ENCODE measurements at regions of chr12 and their contacts with region 1.

Region 1: GRCh38 chr12:75390899-75391538 is at the start of gene GLIPR1L2:
- DNase-seq: peak; percentile 98
- H3K4me3 Mint-ChIP-seq: peak within 1 kb of the TSS; percentile 91
- H3K27ac Mint-ChIP-seq: peak within 1 kb of the TSS; percentile 99
- H3K4me1 Mint-ChIP-seq: peaks cover 28% of the 10 kb centered on the region
- H3K27me3 Mint-ChIP-seq: no peaks in the 10 kb centered on the region
- CTCF ChIP-seq: peak; percentile 85
- total RNA-seq, gene GLIPR1L2: 0.23 TPM in 1 of 2 replicates, not detected in the other

Region 2: GRCh38 chr12:74646831-74647230 is 744.2 kb before region 1 on chr12:
- CTCF ChIA-PET with region 1: no interaction called
- POLR2A ChIA-PET with region 1: no interaction called
- intact Hi-C with region 1: no loop called
- DNase-seq: peak; percentile 51
- H3K4me3 Mint-ChIP-seq: no peak overlapping the region
- H3K27ac Mint-ChIP-seq: no peak overlapping the region
- H3K4me1 Mint-ChIP-seq: no peaks in the 10 kb centered on the region
- H3K27me3 Mint-ChIP-seq: no peaks in the 10 kb centered on the region
- CTCF ChIP-seq: peak; percentile 29

Region 3: DNA sequence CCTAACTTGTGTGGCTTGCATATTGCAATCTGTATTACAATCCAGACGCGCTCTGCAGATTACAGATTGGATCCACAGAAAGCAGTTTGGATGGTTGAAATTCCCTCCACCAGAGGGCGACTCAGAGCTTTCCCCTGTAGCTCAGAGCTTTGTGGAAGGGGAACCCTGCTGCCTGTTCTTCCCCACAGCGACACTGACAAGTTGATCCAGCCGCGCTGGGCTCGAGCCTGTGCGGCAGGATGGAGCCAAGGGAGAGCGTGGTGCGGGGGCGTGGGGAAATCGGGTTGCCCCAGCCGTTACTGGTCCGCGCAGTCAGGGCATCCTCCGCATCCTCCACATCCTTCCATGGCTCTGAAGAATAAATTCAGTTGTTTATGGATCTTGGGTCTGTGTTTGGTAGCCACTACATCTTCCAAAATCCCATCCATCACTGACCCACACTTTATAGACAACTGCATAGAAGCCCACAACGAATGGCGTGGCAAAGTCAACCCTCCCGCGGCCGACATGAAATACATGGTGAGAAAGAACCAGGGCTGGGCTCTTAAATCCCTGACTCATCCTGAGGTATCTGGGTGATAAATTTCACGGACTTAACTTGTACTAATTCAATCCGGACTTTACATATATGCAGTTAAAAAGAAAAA is 56.5 kb before region 1 on chr12 and contains the start of gene GLIPR1L1:
- CTCF ChIA-PET with region 1: interaction called, 8 read pairs
- POLR2A ChIA-PET with region 1: interaction called, 16 read pairs
- intact Hi-C with region 1: loop called (anchors 1 kb)
- DNase-seq: peak; percentile 88
- H3K4me3 Mint-ChIP-seq: peak within 1 kb of the TSS; percentile 77
- H3K27ac Mint-ChIP-seq: peak within 1 kb of the TSS; percentile 33
- H3K4me1 Mint-ChIP-seq: peaks cover 8% of the 10 kb centered on the region
- H3K27me3 Mint-ChIP-seq: no peaks in the 10 kb centered on the region
- CTCF ChIP-seq: peak; percentile 91
- total RNA-seq, gene GLIPR1L1: not detected in 2 replicates

Region 4: GRCh38 chr12:75378354-75378753 is 12.7 kb before region 1 on chr12:
- CTCF ChIA-PET with region 1: interaction called, 5 read pairs
- POLR2A ChIA-PET with region 1: interaction called, 14 read pairs
- intact Hi-C with region 1: no loop called
- DNase-seq: peak; percentile 3
- H3K4me3 Mint-ChIP-seq: no peak overlapping the region
- H3K27ac Mint-ChIP-seq: peak overlapping the region; percentile 44
- H3K4me1 Mint-ChIP-seq: peaks cover 6% of the 10 kb centered on the region
- H3K27me3 Mint-ChIP-seq: no peaks in the 10 kb centered on the region
- CTCF ChIP-seq: no peak

Region 5: DNA sequence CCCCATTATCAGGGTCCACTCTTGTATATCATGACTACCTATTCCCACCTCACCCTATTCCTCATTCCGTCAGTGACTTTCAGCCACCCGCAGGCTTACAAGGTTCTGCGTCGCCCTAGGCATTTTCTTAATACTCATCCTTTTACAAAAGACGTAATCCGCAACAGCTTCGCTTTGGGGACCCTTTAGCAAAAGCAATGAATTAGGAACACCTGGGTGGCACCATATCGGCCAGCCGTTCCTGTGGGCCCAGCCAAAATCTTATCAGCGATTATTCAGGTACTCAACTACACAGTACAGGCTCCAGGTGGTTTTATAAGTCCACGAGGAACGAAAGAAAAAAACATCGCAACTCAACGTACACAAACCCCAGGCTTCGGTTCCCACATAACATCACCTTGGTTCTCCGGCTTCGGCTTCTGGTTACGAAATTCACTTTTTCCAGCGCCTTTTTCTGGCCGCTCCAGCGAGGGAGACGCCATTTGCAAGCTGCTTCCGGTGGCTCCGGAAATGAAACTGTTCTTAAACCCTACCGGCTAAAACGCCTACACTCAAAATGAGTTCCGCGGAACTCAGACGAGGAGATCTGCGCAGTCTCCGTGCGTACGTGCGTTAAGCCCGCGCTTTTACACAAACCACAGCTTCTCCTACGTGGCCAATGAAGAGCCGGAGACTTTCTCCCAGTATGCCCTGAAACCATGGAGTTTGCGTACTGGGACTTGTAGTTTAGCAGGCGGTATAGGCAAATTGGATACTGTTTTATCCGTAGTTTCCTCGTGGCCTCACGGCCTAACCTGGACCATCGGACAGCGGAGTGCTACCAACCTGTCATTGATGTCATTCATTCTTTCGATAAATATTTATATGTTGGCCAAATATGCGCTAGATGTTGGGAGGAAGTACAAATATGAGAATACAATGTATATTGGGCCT is 120.4 kb after region 1 on chr12 and contains the start of gene KRR1:
- CTCF ChIA-PET with region 1: interaction called, 9 read pairs
- POLR2A ChIA-PET with region 1: interaction called, 41 read pairs
- intact Hi-C with region 1: loop called (anchors 2 kb)
- DNase-seq: peak; percentile 95
- H3K4me3 Mint-ChIP-seq: peak within 1 kb of the TSS; percentile 100
- H3K27ac Mint-ChIP-seq: peak within 1 kb of the TSS; percentile 99
- H3K4me1 Mint-ChIP-seq: peaks cover 19% of the 10 kb centered on the region
- H3K27me3 Mint-ChIP-seq: no peaks in the 10 kb centered on the region
- CTCF ChIP-seq: no peak
- total RNA-seq, gene KRR1: 68.0 and 76.8 TPM in 2 replicates

Measured in MCF 10A (cell line).